Ovary (tissue), 10 donors: ENCODE measurements at regions of chr20 and their contacts with region 1.

Region 1: GRCh38 chr20:23034721-23035671 is at the start of gene SSTR4:
- DNase-seq: no peak
- H3K4me3 ChIP-seq: no peak within 1 kb of the TSS
- H3K27ac ChIP-seq: no peak within 1 kb of the TSS
- H3K4me1 ChIP-seq: no peaks in the 10 kb centered on the region
- H3K27me3 ChIP-seq: no peaks in the 10 kb centered on the region
- CTCF ChIP-seq: no peak
- EP300 ChIP-seq: no peak
- POLR2A ChIP-seq: no peak
- total RNA-seq, gene SSTR4: 0.15 to 0.69 TPM in 2 of 7 donors, not detected in the others

Region 2: DNA sequence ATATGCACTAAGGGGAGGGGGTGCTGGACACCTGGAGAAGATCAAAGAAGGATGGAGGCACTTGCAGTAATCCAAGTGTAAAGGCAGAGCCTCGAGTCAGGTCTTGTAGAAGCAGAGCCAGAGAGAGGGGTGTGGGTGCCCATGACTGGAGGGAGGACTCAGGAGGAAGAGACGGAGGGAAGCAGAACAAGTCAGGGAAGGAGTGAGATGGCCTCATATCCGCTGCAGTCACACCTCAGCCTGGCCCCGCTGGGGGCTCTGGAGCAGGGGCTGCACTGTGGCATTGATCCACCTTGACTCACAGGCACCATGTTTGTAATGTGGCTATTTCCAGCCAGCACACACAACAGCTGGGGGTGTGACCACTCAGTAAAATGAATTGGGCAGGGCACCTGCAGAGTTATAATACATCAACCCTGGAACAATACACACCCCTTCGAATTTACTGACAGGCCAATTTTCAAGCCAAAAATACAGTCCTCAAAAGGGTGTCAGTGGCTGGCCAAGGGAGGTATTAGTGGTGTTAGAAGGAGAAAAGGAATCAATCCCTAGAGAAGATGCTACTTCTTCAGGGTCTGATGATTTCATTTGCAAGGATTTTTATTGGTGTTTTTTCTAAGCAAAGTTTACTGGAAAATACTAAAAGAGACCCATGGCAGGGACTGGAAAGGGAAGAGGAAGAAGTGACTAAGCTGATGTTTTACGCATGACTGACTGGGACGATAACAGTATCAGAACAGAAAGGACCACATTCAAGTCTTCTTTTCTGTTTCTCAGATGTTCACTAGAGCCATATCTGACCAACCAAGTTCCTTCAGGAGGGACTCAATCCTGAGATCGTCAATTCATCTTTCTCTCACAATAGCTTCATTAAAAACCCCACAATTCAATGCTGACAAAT is 296.7 kb after region 1 on chr20:
- intact Hi-C with region 1: loop called in 1 of 4 experiments (anchors 10 kb)
- DNase-seq: no peak
- H3K4me3 ChIP-seq: no peak overlapping the region
- H3K27ac ChIP-seq: no peak overlapping the region
- H3K4me1 ChIP-seq: no peaks in the 10 kb centered on the region
- H3K27me3 ChIP-seq: no peaks in the 10 kb centered on the region
- CTCF ChIP-seq: no peak
- EP300 ChIP-seq: no peak
- POLR2A ChIP-seq: no peak